Activated T-helper 1 cell treated with anti-CD3 and anti-CD28 coated beads, Interleukin-12 subunit alpha, Interleukin-12 subunit beta, Interleukin-2, Interleukin-4 antibody, amounts not matched to agents 30 ng/mL and 10 ng/mL and 1 ng/mL, durations not matched to agents 14 hours and 24 hours and 36 hours (primary cell): ENCODE measurements at regions of chr7 and their contacts with region 1.

Region 1: DNA sequence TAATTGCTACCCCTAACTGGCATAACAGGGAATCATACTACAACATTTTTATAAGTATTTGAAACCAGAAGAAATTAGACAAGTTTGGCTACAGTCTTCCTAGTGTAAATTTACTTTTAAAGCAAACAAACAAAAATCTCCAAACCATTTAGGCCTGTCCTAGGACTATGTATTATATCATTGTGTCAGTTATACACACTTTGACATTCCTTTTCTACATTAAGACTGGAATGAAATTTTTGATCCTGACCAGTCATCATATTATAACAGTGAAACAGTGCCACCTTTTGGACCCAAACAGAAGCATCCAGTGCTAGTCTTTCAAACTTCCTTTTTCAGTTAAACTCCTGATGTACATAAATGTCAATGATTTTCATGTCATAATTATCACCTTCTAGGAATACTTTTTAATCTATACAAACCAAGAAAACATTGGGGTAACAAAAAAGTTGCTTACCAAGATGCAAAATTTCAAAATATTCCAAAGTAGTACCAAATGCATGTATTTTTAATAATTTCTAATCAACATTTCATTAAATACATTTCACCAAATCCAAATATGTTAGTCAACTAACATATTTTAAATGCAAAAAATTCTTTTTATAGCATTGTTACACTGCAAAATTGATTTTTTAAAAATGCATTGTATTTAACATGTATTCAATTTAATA is 75.7 kb downstream of the IMMP2L start:
- DNase-seq: no peak
- H3K4me3 Mint-ChIP-seq: no peak overlapping the region
- H3K27ac Mint-ChIP-seq: no peak overlapping the region
- H3K4me1 Mint-ChIP-seq: no peaks in the 10 kb centered on the region
- H3K27me3 Mint-ChIP-seq: no peaks in the 10 kb centered on the region

Region 2: DNA sequence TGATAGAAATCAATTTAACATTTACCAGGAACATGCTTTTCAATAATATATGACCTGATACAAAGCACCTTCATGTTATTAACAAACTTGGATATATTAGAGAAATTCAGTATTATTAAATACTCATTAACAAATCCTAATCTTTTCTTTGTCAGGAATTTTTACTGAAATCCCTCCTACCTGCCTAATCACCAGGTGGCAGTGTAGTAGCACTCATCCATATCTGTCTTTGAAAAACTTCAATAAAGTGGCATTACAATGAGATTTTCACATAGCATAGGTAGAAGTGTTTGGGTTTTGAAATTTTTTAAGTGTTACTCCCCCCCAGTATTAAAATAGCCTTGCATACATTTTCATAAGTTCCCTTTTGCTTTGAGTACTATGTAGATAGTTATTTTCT is 1642.2 kb before region 1 on chr7:
- intact Hi-C with region 1: loop called (anchors 1 kb)
- DNase-seq: no peak
- H3K4me3 Mint-ChIP-seq: no peak overlapping the region
- H3K27ac Mint-ChIP-seq: no peak overlapping the region
- H3K4me1 Mint-ChIP-seq: no peaks in the 10 kb centered on the region
- H3K27me3 Mint-ChIP-seq: no peaks in the 10 kb centered on the region

Region 3: GRCh38 chr7:110090110-110090769 is 1396.4 kb before region 1 on chr7:
- intact Hi-C with region 1: loop called (anchors 1 kb)
- DNase-seq: no peak
- H3K4me3 Mint-ChIP-seq: no peak overlapping the region
- H3K27ac Mint-ChIP-seq: no peak overlapping the region
- H3K4me1 Mint-ChIP-seq: no peaks in the 10 kb centered on the region
- H3K27me3 Mint-ChIP-seq: no peaks in the 10 kb centered on the region

Region 4: GRCh38 chr7:111470998-111471397 is 15.6 kb before region 1 on chr7:
- intact Hi-C with region 1: no loop called
- DNase-seq: no peak
- H3K4me3 Mint-ChIP-seq: no peak overlapping the region
- H3K27ac Mint-ChIP-seq: no peak overlapping the region
- H3K4me1 Mint-ChIP-seq: no peaks in the 10 kb centered on the region
- H3K27me3 Mint-ChIP-seq: no peaks in the 10 kb centered on the region